ENCODE measurements at regions of chr18 and their contacts with region 1.

Region 1: GRCh38 chr18:68406761-68407160 is 308.1 kb downstream of the TMX3 start:
- DNase-seq: no peak
- H3K4me3 Mint-ChIP-seq: no peak overlapping the region
- H3K27ac Mint-ChIP-seq: no peak overlapping the region
- H3K4me1 Mint-ChIP-seq: peaks cover 6% of the 10 kb centered on the region
- H3K27me3 Mint-ChIP-seq: no peaks in the 10 kb centered on the region
- CTCF ChIP-seq: no peak

Region 2: DNA sequence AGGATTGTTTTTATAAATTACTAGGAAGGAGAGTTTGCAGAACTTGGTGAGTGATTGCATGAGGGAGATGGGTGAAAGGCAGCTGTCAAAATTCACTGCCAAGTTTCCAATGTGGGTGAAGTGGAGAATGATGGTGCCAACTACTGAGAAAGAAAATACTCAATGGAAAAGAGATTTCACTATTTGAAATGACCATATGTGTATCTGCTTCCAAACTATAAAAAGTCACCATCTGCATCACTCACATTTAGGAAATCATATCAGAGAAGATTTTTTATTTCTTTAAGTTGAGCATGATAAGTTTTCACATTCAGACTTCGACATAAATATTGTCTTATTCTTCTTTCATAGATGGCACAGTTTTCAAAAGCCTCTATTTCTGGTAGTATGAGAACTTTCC is 320.3 kb before region 1 on chr18:
- CTCF ChIA-PET with region 1: no interaction called
- POLR2A ChIA-PET with region 1: no interaction called
- intact Hi-C with region 1: no loop called
- DNase-seq: no peak
- H3K4me3 Mint-ChIP-seq: no peak overlapping the region
- H3K27ac Mint-ChIP-seq: no peak overlapping the region
- H3K4me1 Mint-ChIP-seq: no peaks in the 10 kb centered on the region
- H3K27me3 Mint-ChIP-seq: no peaks in the 10 kb centered on the region
- CTCF ChIP-seq: no peak

Region 3: GRCh38 chr18:68262690-68263294 is 144.0 kb before region 1 on chr18:
- CTCF ChIA-PET with region 1: no interaction called
- POLR2A ChIA-PET with region 1: no interaction called
- intact Hi-C with region 1: loop called (anchors 5 kb)
- DNase-seq: peak; percentile 65
- H3K4me3 Mint-ChIP-seq: peak overlapping the region; percentile 43
- H3K27ac Mint-ChIP-seq: peak overlapping the region; percentile 87
- H3K4me1 Mint-ChIP-seq: peaks cover 17% of the 10 kb centered on the region
- H3K27me3 Mint-ChIP-seq: no peaks in the 10 kb centered on the region
- CTCF ChIP-seq: no peak